ENCODE measurements at regions of chr5 and their contacts with region 1.

Region 1: DNA sequence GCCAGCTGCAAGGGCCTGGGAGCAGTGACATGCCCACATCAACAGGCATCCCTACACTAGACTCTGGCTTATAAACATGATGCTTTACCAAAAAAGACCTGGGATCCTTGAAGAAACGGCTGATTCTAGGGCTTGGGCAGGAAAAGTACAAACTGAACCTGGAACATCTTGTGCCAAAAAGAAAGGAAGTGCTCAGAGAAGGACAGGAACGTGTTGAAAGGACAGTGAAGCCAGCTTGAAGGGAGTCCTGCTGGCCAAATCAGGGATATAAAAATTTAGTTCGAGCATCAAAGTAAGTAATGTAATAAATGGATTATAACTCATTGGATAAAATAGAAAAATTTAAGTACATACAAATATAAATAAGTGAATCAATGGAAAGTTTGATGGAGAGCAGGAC is 58.1 kb downstream of the ALDH7A1 start:
- DNase-seq: peak; percentile 45
- ATAC-seq: no peak

Region 2: GRCh38 chr5:126339215-126339805 is 197.6 kb before region 1 on chr5:
- intact Hi-C with region 1: loop called (anchors 5 kb)
- DNase-seq: no peak
- ATAC-seq: no peak

Region 3: GRCh38 chr5:126422989-126423788 is 113.7 kb before region 1 on chr5 and contains the start of gene GRAMD2B:
- intact Hi-C with region 1: loop called (anchors 5 kb)
- DNase-seq: peak; percentile 90
- ATAC-seq: peak; percentile 96
- total RNA-seq, gene GRAMD2B: 29.3 TPM

Region 4: DNA sequence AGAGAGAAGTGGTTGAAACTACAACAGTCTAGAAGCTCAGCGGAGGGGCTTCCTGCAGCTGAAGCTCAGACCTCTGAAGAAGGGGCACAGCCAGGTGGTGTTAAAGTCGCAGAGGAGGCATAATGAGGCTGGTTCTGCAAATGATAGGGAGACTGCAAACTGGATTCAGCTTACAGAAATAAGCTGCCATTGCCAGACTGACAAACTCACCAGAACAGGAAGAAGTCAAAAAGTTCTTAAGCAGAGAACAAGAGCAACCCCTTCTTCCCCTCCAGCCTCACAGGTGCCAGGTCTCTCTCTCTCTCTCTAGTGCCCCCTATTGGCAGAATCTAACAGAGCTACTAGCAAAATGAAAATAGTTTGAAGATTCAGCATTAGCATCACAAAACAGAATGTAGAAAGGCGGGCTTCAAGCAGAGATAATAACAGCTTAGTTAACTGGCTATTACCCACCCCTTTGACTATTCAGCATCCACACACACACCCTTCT is 37.0 kb before region 1 on chr5:
- intact Hi-C with region 1: loop called (anchors 5 kb)
- DNase-seq: no peak
- ATAC-seq: no peak

Measured in Right ventricle myocardium inferior (tissue), 1 donor.